SK-N-SH (cell line): ENCODE measurements at regions of chr1 and their contacts with region 1.

Region 1: DNA sequence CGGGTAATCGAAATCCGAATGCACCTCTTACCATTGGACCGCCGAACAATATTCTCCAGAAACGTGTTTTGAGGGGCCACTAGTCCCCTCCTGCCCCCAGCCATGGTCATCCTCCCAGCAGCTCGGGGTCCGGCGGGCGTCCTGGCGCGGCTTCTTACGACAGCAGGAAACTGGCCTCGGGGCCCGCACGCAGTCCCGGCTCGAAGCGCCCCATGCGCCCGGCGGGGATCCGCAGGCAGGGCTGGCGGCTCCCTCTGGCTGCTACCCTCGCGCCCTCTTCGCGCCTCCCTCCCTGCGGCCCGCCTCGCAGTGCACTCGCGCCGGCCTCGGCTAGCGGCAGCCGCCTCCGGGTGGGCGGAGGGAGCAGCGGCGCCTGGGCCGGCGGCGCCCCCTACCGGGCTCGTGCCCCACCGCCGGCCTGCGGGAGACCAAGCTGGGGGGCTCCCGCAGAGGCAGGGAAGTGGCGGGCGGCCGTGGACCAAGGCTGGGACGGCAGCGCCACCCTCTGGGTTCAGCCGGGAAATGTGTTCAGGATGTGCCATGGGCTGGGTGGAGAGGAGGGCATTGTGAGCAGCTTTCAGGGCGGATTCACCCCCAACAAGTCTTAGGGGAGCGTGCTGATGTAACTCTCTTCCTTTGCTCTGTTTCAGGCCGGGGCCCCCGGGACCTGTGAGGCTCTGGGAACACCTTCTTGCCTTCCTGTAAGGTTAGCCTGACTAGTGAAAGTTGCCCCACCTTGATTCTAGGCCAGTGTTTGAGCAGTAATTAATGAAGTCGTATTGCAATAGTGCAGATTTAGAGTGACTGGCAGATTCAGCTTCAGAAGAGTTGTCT is at the start of gene KCNH1:
- DNase-seq: peak; percentile 96
- H3K4me3 ChIP-seq: peak within 1 kb of the TSS; percentile 61 to 72
- H3K27ac ChIP-seq: peak within 1 kb of the TSS in 1 of 2 experiments; percentile 68; a peak in 2 of 4 replicates
- H3K4me1 ChIP-seq: peaks cover 0 to 13% of the 10 kb centered on the region in 2 experiments; a peak in 2 of 4 replicates
- H3K27me3 ChIP-seq: peaks cover 27% of the 10 kb centered on the region
- CTCF ChIP-seq: peak; percentile 95
- EP300 ChIP-seq: no peak; a peak in 2 of 4 replicates
- RAD21 ChIP-seq: peak; percentile 95
- polyA plus RNA-seq, gene KCNH1: 0.08 and 0.26 TPM in 2 replicates

Region 2: DNA sequence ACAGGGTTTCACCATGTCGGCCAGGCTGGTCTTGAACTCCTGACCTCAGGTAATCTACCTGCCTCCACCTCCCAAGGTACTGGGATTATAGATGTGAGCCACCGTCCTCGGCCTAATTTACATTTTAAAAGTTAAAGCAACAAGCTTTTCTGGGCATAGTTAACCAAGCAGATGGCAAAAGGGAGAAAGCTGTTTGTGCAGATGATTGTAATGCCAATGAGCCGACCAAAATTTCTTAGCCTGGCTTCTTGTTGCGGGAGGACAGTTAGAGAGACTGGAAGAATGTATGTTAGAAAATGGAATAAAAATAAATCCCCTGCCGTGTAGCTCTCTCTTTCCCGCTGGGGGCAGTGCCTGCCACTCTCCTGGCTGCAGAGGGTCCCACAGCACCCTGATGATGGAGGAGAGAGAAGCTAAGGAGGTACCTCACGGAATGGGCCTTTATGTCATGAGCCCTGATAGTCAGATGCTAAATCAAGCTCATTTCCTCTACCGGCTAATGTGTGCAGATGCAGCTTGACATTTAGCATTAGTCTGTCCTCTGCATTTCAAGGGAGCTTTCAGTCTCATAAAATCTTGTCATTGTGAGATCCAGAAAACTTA is 718.1 kb before region 1 on chr1:
- CTCF ChIA-PET with region 1: interaction called, 323 read pairs
- POLR2A ChIA-PET with region 1: interaction called, 3 read pairs
- DNase-seq: no peak
- H3K4me3 ChIP-seq: no peak overlapping the region
- H3K27ac ChIP-seq: no peak overlapping the region
- H3K4me1 ChIP-seq: no peaks in the 10 kb centered on the region
- H3K27me3 ChIP-seq: no peaks in the 10 kb centered on the region
- CTCF ChIP-seq: no peak
- EP300 ChIP-seq: no peak
- RAD21 ChIP-seq: no peak

Region 3: GRCh38 chr1:210516696-210517459 is 617.2 kb before region 1 on chr1:
- CTCF ChIA-PET with region 1: interaction called, 15 read pairs
- POLR2A ChIA-PET with region 1: no interaction called
- DNase-seq: peak; percentile 61
- H3K4me3 ChIP-seq: no peak overlapping the region
- H3K27ac ChIP-seq: peak overlapping the region; percentile 57 to 78
- H3K4me1 ChIP-seq: peaks cover 0 to 18% of the 10 kb centered on the region in 2 experiments; a peak in 3 of 4 replicates
- H3K27me3 ChIP-seq: no peaks in the 10 kb centered on the region
- CTCF ChIP-seq: no peak
- EP300 ChIP-seq: peak; percentile 65 to 67; a peak in 3 of 4 replicates
- RAD21 ChIP-seq: no peak

Region 4: DNA sequence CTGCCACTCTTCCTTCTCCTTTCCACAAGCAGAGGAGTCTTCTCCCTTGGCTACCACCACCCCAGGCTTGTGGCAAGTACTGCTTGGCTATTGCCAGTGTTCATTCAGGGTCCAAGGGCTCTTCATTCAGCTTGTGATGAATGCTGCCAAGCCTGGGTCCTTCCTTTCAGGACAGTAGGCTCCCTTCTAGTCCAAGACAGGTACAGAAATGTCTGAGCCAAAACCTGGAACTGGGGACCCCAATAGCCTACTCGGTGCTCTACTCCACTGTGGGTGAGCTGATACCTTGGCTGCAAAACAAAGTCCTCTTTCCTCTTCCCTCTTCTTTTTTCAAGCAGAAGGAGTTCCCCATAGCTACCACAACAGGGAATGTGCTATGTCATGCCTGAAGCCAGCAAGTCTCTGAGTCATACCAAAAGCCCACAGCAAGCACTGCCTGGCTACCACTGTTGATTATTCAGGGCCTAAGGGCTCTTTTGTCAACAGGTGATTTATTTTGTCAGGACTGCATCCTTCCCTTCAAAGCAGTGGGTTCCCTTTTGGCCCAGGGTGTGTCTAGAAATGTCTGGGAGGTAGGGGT is 536.4 kb before region 1 on chr1:
- CTCF ChIA-PET with region 1: interaction called, 10 read pairs
- POLR2A ChIA-PET with region 1: no interaction called
- DNase-seq: no peak
- H3K4me3 ChIP-seq: no peak overlapping the region
- H3K27ac ChIP-seq: peak overlapping the region; percentile 77 to 98
- H3K4me1 ChIP-seq: peaks cover 11 to 25% of the 10 kb centered on the region in 2 experiments; a peak in 3 of 4 replicates
- H3K27me3 ChIP-seq: no peaks in the 10 kb centered on the region
- CTCF ChIP-seq: no peak
- EP300 ChIP-seq: peak in 1 of 2 experiments; percentile 20; a peak in 1 of 4 replicates
- RAD21 ChIP-seq: no peak

Region 5: DNA sequence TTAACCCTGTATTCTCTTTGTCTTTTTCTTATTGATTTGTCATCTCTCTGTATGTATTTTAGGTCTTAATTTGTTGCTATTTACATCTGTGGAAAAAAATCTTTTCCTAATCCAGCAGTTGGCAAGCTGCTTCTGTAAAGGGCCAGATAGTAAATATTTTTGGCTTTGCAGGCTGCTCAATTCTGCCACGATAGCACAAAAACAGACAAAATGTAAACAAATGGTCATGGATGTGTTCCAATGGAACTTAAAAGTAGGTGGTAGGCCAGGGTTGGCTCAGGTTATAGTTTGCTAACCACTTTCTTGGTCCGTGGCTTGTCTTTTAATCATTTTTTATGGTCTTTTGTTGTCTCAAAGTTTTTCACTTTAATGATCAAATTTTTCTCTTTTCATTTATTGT is 433.5 kb before region 1 on chr1:
- CTCF ChIA-PET with region 1: interaction called, 10 read pairs
- POLR2A ChIA-PET with region 1: interaction called, 3 read pairs
- DNase-seq: no peak
- H3K4me3 ChIP-seq: no peak overlapping the region
- H3K27ac ChIP-seq: no peak overlapping the region
- H3K4me1 ChIP-seq: peaks cover 0 to 30% of the 10 kb centered on the region in 2 experiments; a peak in 1 of 4 replicates
- H3K27me3 ChIP-seq: no peaks in the 10 kb centered on the region
- CTCF ChIP-seq: no peak
- EP300 ChIP-seq: no peak
- RAD21 ChIP-seq: no peak

Region 6: DNA sequence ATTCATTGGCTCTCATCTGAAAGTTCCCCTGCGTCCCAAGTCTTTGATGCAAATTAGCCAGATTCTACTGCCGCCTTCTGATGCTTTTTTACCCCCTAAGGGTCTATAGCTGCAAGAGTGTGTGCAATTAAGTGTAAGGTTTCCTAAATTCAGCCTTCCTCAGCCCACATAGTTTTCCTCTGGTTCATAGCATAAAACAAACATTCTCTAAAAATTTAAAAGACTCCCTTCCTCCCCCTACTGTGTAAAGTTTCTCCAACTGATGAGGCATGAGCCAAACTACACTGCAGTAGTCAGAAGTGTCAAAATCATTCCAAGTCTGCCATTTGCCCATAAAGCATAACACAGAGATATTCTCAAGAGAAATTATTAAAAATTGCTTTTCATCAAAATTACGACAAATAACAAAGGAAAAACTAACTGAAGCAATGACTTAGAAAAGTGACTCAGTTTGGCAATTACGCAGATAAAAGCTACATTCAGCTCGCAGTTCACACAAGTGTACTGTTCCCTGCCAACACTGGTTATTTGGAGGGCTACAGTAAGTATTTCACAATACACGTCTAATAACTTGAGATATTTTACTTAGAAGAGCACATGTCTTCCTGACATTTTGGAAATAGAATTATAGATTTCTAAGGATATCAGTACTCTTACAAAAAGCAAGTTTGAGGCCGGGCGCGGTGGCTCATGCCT is 15.5 kb before region 1 on chr1:
- CTCF ChIA-PET with region 1: interaction called, 13 read pairs
- POLR2A ChIA-PET with region 1: no interaction called
- DNase-seq: no peak
- H3K4me3 ChIP-seq: no peak overlapping the region
- H3K27ac ChIP-seq: no peak overlapping the region
- H3K4me1 ChIP-seq: no peaks in the 10 kb centered on the region
- H3K27me3 ChIP-seq: no peaks in the 10 kb centered on the region
- CTCF ChIP-seq: no peak
- EP300 ChIP-seq: no peak
- RAD21 ChIP-seq: no peak

Region 7: DNA sequence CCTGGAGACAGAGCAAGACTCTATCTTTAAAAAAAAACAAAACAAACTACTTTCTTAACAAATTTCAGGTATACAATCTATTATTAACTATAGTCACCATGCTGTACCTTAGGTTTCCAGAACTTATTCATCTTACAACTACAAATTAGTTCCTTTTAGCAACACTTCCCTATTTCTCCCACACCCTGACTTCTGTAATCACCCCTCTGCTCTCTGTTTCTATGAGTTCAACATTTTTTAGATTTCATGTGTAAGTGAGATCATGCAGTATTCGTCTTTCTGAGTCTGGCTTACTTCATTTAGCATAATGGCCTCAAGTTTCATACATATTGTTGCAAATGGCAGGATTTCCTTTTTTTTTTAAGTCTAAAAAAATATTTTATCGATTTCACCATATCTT is 774.4 kb after region 1 on chr1:
- CTCF ChIA-PET with region 1: no interaction called
- POLR2A ChIA-PET with region 1: no interaction called
- DNase-seq: no peak
- H3K4me3 ChIP-seq: no peak overlapping the region
- H3K27ac ChIP-seq: no peak overlapping the region
- H3K4me1 ChIP-seq: no peaks in the 10 kb centered on the region
- H3K27me3 ChIP-seq: no peaks in the 10 kb centered on the region
- CTCF ChIP-seq: no peak
- EP300 ChIP-seq: no peak
- RAD21 ChIP-seq: no peak